ENCODE measurements at regions of chr3 and their contacts with region 1.

Region 1: GRCh38 chr3:77489216-77489615 is 449.3 kb downstream of the ROBO2 start:
- DNase-seq: no peak
- H3K4me3 ChIP-seq: no peak overlapping the region
- H3K27ac ChIP-seq: no peak overlapping the region
- H3K4me1 ChIP-seq: no peaks in the 10 kb centered on the region
- H3K27me3 ChIP-seq: no peaks in the 10 kb centered on the region
- CTCF ChIP-seq: no peak
- EP300 ChIP-seq: no peak
- POLR2A ChIP-seq: no peak

Region 2: DNA sequence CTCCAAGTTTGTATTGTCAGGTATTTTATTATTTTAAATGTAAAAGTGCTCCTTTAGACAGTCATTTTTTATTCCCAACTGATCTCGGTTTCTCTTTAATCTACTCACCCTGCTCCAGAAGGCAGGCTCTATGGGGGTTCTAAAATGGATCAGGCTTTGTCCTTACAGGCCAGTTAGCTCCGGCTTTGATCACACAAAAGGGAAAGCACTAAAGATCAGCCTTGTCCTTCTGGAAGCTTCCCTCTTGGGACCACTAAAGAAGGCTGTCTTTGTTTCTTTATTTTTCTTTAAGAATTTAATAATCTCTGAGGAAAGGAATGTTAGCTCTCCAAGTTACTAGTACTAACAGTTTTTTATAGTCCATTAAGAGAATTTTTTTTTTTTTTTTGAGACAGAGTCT is 1143.3 kb before region 1 on chr3:
- in situ Hi-C with region 1: no loop called
- intact Hi-C with region 1: no loop called
- DNase-seq: no peak
- H3K4me3 ChIP-seq: no peak overlapping the region
- H3K27ac ChIP-seq: no peak overlapping the region
- H3K4me1 ChIP-seq: no peaks in the 10 kb centered on the region
- H3K27me3 ChIP-seq: no peaks in the 10 kb centered on the region
- CTCF ChIP-seq: no peak
- EP300 ChIP-seq: no peak
- POLR2A ChIP-seq: no peak

Region 3: DNA sequence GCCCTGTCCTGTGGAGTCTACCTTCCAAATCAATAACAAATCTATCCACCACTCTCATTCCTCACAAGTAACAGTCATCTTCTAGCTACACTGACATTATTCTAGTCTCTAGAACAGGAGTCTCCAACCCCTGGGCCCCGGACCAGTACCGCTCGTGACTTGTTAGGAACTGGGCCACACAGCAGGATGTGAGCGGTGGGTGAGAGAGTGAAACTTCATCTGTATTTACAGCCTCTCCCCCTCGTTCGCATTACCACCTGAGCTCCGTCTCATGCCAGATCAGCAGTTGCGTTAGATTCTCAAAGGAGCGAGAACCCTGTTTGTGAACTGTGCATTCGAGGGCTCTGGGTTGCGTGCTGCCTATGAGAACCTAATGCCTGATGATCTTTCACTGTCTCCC is 417.4 kb before region 1 on chr3:
- in situ Hi-C with region 1: no loop called
- intact Hi-C with region 1: loop called (anchors 5 kb)
- DNase-seq: no peak
- H3K4me3 ChIP-seq: no peak overlapping the region
- H3K27ac ChIP-seq: no peak overlapping the region
- H3K4me1 ChIP-seq: no peaks in the 10 kb centered on the region
- H3K27me3 ChIP-seq: no peaks in the 10 kb centered on the region
- CTCF ChIP-seq: no peak
- EP300 ChIP-seq: no peak
- POLR2A ChIP-seq: no peak